Activated B cell treated with CpG ODN at 0.5 μM for 24 hours (primary cell): ENCODE measurements at regions of chr1 and their contacts with region 1.

Region 1: GRCh38 chr1:89670163-89670562 is 37.2 kb downstream of the LRRC8C start:
- DNase-seq: no peak
- ATAC-seq: peak; percentile 90
- H3K4me3 Mint-ChIP-seq: peak overlapping the region; percentile 16
- H3K27ac Mint-ChIP-seq: peak overlapping the region; percentile 69
- H3K4me1 Mint-ChIP-seq: peaks cover 45% of the 10 kb centered on the region
- H3K27me3 Mint-ChIP-seq: no peaks in the 10 kb centered on the region
- CTCF ChIP-seq: no peak

Region 2: DNA sequence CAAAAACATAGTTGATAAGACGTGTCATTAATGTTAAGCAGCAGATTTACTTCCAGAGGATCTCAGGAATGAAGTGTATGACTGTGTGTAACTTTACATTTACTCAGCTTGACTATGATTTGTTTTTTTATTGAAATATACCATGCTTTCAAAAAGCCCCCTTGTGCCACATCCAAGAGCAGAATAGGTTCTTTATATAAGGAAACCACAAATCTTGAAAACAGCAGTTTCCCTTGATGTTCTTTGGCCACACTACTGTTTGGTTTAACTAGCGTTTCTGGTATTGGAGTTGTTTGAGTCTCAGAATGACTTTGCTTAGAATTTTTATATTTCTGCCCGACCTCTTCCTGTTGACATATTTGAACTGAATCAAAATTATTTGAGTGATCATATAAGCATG is 12.3 kb before region 1 on chr1:
- CTCF ChIA-PET with region 1: interaction called, 3 read pairs
- POLR2A ChIA-PET with region 1: interaction called, 3 read pairs
- intact Hi-C with region 1: loop called (anchors 1 kb)
- DNase-seq: no peak
- ATAC-seq: peak; percentile 34
- H3K4me3 Mint-ChIP-seq: no peak overlapping the region
- H3K27ac Mint-ChIP-seq: peak overlapping the region; percentile 27
- H3K4me1 Mint-ChIP-seq: peaks cover 54% of the 10 kb centered on the region
- H3K27me3 Mint-ChIP-seq: no peaks in the 10 kb centered on the region
- CTCF ChIP-seq: no peak

Region 3: DNA sequence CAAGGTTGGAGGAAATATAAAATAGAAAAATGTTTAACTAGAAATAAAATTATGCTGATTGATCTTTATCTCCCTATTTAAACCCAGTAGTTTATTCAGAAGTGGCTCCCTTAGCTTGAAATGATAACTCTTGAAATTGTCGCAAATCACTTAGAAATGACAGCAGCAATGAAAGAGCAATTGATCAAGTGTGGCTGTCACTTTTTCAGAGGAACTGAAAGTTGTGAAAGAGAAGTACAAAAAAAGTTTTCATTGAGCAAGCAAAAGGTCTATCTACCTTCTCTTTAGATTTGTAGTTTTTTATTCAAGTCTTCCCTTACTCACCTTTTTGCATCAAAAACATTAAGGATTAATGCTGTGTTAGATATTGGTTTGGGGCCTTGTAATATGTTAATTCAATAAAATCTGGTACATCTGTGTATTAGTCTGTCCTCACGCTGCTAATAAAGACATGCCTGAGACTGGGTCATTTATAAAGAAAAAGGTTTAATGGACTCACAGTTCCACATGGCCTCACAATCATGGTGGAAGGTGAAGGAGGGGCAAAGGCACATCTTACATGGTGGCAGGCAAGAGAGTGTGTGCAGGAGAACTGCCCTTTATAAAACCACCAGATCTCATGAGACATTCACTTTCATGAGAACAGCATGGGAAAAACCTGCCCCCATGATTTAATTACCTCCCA is 11.0 kb after region 1 on chr1:
- CTCF ChIA-PET with region 1: no interaction called
- POLR2A ChIA-PET with region 1: interaction called, 3 read pairs
- intact Hi-C with region 1: loop called (anchors 1 kb)
- DNase-seq: no peak
- ATAC-seq: peak; percentile 81
- H3K4me3 Mint-ChIP-seq: peak overlapping the region; percentile 64
- H3K27ac Mint-ChIP-seq: peak overlapping the region; percentile 88
- H3K4me1 Mint-ChIP-seq: peaks cover 24% of the 10 kb centered on the region
- H3K27me3 Mint-ChIP-seq: no peaks in the 10 kb centered on the region
- CTCF ChIP-seq: no peak

Region 4: GRCh38 chr1:89719502-89720306 is 49.5 kb after region 1 on chr1:
- CTCF ChIA-PET with region 1: interaction called, 4 read pairs
- POLR2A ChIA-PET with region 1: interaction called, 3 read pairs
- intact Hi-C with region 1: loop called (anchors 1 kb)
- DNase-seq: no peak
- ATAC-seq: peak; percentile 92
- H3K4me3 Mint-ChIP-seq: peak overlapping the region; percentile 72
- H3K27ac Mint-ChIP-seq: peak overlapping the region; percentile 96
- H3K4me1 Mint-ChIP-seq: peaks cover 56% of the 10 kb centered on the region
- H3K27me3 Mint-ChIP-seq: no peaks in the 10 kb centered on the region
- CTCF ChIP-seq: no peak